ENCODE measurements at regions of chr19 and their contacts with region 1.

Region 1: GRCh38 chr19:53195265-53195903 is 2.2 kb upstream of the ZNF665 start:
- DNase-seq: peak; percentile 39 to 86 (median 77)
- ATAC-seq: peak; percentile 53
- H3K4me3 ChIP-seq: no peak overlapping the region
- H3K4me3 Mint-ChIP-seq: peak overlapping the region; percentile 4 to 93 (median 64)
- H3K27ac ChIP-seq: no peak overlapping the region
- H3K27ac Mint-ChIP-seq: peak overlapping the region; percentile 30 to 96 (median 64)
- H3K4me1 ChIP-seq: peaks cover 9% of the 10 kb centered on the region in 2 donors
- H3K4me1 Mint-ChIP-seq: peaks cover 17 to 57% (median 46%) of the 10 kb centered on the region in 7 donors
- H3K27me3 ChIP-seq: no peaks in the 10 kb centered on the region
- H3K27me3 Mint-ChIP-seq: no peaks in the 10 kb centered on the region

Region 2: DNA sequence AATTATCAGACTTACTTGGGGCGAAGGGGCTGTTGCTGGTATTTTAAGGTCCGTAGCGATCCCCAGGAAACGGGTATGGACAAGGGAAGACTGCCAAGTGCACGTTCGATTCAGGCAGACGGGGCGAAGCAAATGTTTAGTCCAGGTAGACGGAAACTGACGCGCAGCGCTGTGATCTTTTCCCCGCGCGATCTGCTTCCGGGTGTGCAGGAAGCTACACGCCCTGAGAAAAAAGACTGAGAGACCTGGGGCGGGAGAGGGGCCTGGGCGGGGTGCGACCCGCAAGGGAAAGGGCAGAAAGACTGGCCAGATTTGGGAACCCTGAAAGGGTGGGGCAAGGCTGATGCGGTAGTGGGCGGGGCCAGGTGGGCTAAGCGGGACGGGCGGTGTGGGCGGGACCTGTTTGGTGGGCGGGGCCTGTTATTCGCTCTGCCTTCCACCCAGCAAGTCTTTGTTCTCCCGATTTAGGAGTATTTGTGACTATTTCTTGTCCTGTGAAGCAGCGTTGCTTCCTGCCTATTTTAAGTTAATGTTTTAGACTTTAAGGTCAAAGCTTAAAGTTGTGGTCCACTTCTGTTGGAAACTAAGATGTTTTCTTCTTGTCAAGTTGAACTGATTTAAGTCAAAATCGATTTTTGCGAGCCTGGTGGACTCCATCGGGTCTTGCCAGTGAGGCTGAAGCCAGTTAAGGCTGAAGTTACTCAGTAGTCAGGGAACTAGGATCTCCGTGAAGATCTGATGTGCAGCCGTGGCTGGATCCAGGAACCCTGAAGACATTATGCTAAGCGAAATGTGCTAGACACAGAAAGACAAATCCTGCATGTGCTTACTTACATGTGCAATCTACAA is 1023.8 kb before region 1 on chr19 and contains the start of gene ZNF836:
- CTCF ChIA-PET with region 1: no interaction called
- POLR2A ChIA-PET with region 1: no interaction called
- intact Hi-C with region 1: loop called in 1 of 2 experiments (anchors 5 kb)
- DNase-seq: peak; percentile 72 to 95 (median 91)
- ATAC-seq: peak; percentile 98
- H3K4me3 ChIP-seq: peak within 1 kb of the TSS; percentile 92
- H3K4me3 Mint-ChIP-seq: peak within 1 kb of the TSS; percentile 92 to 98 (median 96)
- H3K27ac ChIP-seq: peak within 1 kb of the TSS; percentile 92
- H3K27ac Mint-ChIP-seq: peak within 1 kb of the TSS; percentile 96 to 99 (median 98)
- H3K4me1 ChIP-seq: peaks cover 18 to 19% of the 10 kb centered on the region in 2 donors
- H3K4me1 Mint-ChIP-seq: peaks cover 23 to 48% (median 45%) of the 10 kb centered on the region in 7 donors
- H3K27me3 ChIP-seq: no peaks in the 10 kb centered on the region
- H3K27me3 Mint-ChIP-seq: no peaks in the 10 kb centered on the region
- total RNA-seq, gene ZNF836: 20.1 to 57.5 (median 27.4) TPM

Region 3: GRCh38 chr19:52962394-52963246 is 232.8 kb before region 1 on chr19 and contains the start of gene ZNF816:
- CTCF ChIA-PET with region 1: no interaction called
- POLR2A ChIA-PET with region 1: no interaction called
- intact Hi-C with region 1: loop called (anchors 1 to 5 kb)
- DNase-seq: peak; percentile 94 to 99 (median 98)
- ATAC-seq: peak; percentile 100
- H3K4me3 ChIP-seq: peak within 1 kb of the TSS; percentile 77
- H3K4me3 Mint-ChIP-seq: peak within 1 kb of the TSS; percentile 87 to 96 (median 94)
- H3K27ac ChIP-seq: peak within 1 kb of the TSS; percentile 73
- H3K27ac Mint-ChIP-seq: peak within 1 kb of the TSS; percentile 82 to 95 (median 93)
- H3K4me1 ChIP-seq: peaks cover 12 to 14% of the 10 kb centered on the region in 2 donors
- H3K4me1 Mint-ChIP-seq: peaks cover 15 to 33% (median 29%) of the 10 kb centered on the region in 7 donors
- H3K27me3 ChIP-seq: no peaks in the 10 kb centered on the region
- H3K27me3 Mint-ChIP-seq: no peaks in the 10 kb centered on the region
- total RNA-seq, gene ZNF816: 5.0 to 25.7 (median 11.0) TPM

Region 4: DNA sequence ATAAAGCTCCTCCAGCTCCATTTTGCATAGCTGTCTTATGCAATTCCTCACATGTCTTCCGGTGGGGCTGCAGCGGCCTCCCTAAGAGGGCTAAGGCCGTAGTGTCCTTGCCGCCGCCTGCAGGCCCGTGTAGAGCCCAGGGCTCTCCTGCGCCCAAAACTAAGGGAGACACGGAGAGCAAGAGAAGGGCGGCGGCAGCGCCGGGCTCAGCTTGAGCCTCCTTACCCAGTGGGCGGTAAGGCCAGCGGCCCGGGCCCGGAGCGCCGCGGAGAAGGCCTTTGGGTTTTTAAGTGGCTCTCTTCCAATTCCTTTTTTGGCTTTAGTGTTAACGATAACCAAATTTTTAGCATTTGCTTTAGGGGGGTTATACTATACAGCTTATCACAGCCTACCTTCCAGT is 29.2 kb after region 1 on chr19:
- CTCF ChIA-PET with region 1: no interaction called
- POLR2A ChIA-PET with region 1: no interaction called
- intact Hi-C with region 1: no loop called
- DNase-seq: no peak
- ATAC-seq: no peak
- H3K4me3 ChIP-seq: no peak overlapping the region
- H3K4me3 Mint-ChIP-seq: no peak overlapping the region
- H3K27ac ChIP-seq: no peak overlapping the region
- H3K27ac Mint-ChIP-seq: no peak overlapping the region
- H3K4me1 ChIP-seq: no peaks in the 10 kb centered on the region
- H3K4me1 Mint-ChIP-seq: no peaks in the 10 kb centered on the region
- H3K27me3 ChIP-seq: no peaks in the 10 kb centered on the region
- H3K27me3 Mint-ChIP-seq: no peaks in the 10 kb centered on the region

Region 5: GRCh38 chr19:53237114-53237777 is 41.9 kb after region 1 on chr19:
- CTCF ChIA-PET with region 1: no interaction called
- POLR2A ChIA-PET with region 1: no interaction called
- intact Hi-C with region 1: no loop called
- DNase-seq: no peak
- ATAC-seq: no peak
- H3K4me3 ChIP-seq: no peak overlapping the region
- H3K4me3 Mint-ChIP-seq: no peak overlapping the region
- H3K27ac ChIP-seq: no peak overlapping the region
- H3K27ac Mint-ChIP-seq: no peak overlapping the region
- H3K4me1 ChIP-seq: no peaks in the 10 kb centered on the region
- H3K4me1 Mint-ChIP-seq: no peaks in the 10 kb centered on the region
- H3K27me3 ChIP-seq: no peaks in the 10 kb centered on the region
- H3K27me3 Mint-ChIP-seq: no peaks in the 10 kb centered on the region

Region 6: GRCh38 chr19:53333463-53334449 is 138.4 kb after region 1 on chr19 and contains the start of gene ZNF845:
- CTCF ChIA-PET with region 1: interaction called, 3 read pairs
- POLR2A ChIA-PET with region 1: interaction called, 3 read pairs
- intact Hi-C with region 1: loop called (anchors 1 kb)
- DNase-seq: peak; percentile 91 to 99 (median 97)
- ATAC-seq: peak; percentile 99
- H3K4me3 ChIP-seq: peak within 1 kb of the TSS; percentile 93
- H3K4me3 Mint-ChIP-seq: peak within 1 kb of the TSS; percentile 87 to 97 (median 94)
- H3K27ac ChIP-seq: peak within 1 kb of the TSS; percentile 74
- H3K27ac Mint-ChIP-seq: peak within 1 kb of the TSS; percentile 87 to 97 (median 89)
- H3K4me1 ChIP-seq: peaks cover 0 to 5% of the 10 kb centered on the region in 2 donors
- H3K4me1 Mint-ChIP-seq: peaks cover 14 to 43% (median 22%) of the 10 kb centered on the region in 7 donors
- H3K27me3 ChIP-seq: no peaks in the 10 kb centered on the region
- H3K27me3 Mint-ChIP-seq: peaks cover 0 to 8% (median 6%) of the 10 kb centered on the region in 5 donors
- total RNA-seq, gene ZNF845: 4.6 to 18.9 (median 11.1) TPM

Region 7: DNA sequence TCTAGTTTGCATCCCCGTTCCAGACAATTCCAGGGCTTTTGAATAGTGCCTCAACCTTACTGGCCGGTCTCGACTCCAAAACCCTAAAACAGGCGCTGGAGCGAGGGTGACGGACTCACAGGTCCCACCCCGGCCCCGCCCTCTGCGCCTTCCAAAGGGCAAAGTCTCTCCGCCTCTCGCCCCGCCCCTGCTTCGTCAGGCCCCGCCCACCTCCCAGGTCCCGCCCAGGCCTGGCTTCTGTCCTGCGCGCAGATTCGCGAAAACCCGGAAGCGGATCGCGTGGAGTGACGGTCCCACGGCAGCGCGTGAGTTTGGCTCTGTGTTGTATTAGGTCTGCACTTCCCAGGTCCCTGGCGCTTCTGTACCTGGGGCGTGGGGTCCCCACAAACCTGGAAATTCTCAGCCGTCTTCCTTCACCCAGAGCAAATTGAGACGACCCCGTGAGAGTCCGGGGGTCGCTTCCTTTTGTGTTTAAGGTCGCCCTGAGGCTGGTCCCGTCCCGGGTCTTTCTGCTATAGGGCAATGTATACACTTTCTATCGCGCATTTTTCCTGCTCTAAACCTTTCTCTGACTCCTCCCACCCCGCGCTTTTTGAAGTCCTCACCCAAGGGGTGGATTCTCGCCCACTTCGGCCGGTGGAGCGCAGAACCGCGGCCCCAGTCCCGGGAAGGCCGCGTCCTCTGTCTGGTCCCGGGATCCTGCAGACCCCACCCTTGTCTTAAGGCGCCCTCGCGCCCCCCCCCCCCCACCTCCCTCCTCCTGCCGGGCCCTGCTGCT is 272.3 kb after region 1 on chr19 and contains the start of gene ZNF813:
- CTCF ChIA-PET with region 1: no interaction called
- POLR2A ChIA-PET with region 1: no interaction called
- intact Hi-C with region 1: loop called (anchors 1 kb)
- DNase-seq: peak; percentile 81 to 95 (median 92)
- ATAC-seq: peak; percentile 100
- H3K4me3 ChIP-seq: peak within 1 kb of the TSS; percentile 74
- H3K4me3 Mint-ChIP-seq: peak within 1 kb of the TSS; percentile 88 to 96 (median 94)
- H3K27ac ChIP-seq: peak within 1 kb of the TSS; percentile 73
- H3K27ac Mint-ChIP-seq: peak within 1 kb of the TSS; percentile 76 to 96 (median 90)
- H3K4me1 ChIP-seq: no peaks in the 10 kb centered on the region
- H3K4me1 Mint-ChIP-seq: peaks cover 20 to 45% (median 31%) of the 10 kb centered on the region in 7 donors
- H3K27me3 ChIP-seq: no peaks in the 10 kb centered on the region
- H3K27me3 Mint-ChIP-seq: peaks cover 0 to 24% (median 12%) of the 10 kb centered on the region in 5 donors
- total RNA-seq, gene ZNF813: 2.5 to 11.2 (median 4.6) TPM

Region 8: GRCh38 chr19:53867225-53868090 is 672.1 kb after region 1 on chr19 and contains the start of gene MYADM:
- CTCF ChIA-PET with region 1: no interaction called
- POLR2A ChIA-PET with region 1: no interaction called
- intact Hi-C with region 1: loop called in 1 of 2 experiments (anchors 5 kb)
- DNase-seq: peak; percentile 99 to 100 (median 100)
- ATAC-seq: peak; percentile 80
- H3K4me3 ChIP-seq: peak within 1 kb of the TSS; percentile 90
- H3K4me3 Mint-ChIP-seq: peak within 1 kb of the TSS; percentile 92 to 100 (median 97)
- H3K27ac ChIP-seq: peak within 1 kb of the TSS; percentile 99
- H3K27ac Mint-ChIP-seq: peak within 1 kb of the TSS; percentile 97 to 100 (median 99)
- H3K4me1 ChIP-seq: peaks cover 17 to 26% of the 10 kb centered on the region in 2 donors
- H3K4me1 Mint-ChIP-seq: peaks cover 15 to 45% (median 34%) of the 10 kb centered on the region in 7 donors
- H3K27me3 ChIP-seq: no peaks in the 10 kb centered on the region
- H3K27me3 Mint-ChIP-seq: peaks cover 0 to 5% (median 0%) of the 10 kb centered on the region in 5 donors
- total RNA-seq, gene MYADM: 51.5 to 524 (median 116) TPM